Panc1 (cell line): ENCODE measurements at regions of chr19 and their contacts with region 1.

Region 1: DNA sequence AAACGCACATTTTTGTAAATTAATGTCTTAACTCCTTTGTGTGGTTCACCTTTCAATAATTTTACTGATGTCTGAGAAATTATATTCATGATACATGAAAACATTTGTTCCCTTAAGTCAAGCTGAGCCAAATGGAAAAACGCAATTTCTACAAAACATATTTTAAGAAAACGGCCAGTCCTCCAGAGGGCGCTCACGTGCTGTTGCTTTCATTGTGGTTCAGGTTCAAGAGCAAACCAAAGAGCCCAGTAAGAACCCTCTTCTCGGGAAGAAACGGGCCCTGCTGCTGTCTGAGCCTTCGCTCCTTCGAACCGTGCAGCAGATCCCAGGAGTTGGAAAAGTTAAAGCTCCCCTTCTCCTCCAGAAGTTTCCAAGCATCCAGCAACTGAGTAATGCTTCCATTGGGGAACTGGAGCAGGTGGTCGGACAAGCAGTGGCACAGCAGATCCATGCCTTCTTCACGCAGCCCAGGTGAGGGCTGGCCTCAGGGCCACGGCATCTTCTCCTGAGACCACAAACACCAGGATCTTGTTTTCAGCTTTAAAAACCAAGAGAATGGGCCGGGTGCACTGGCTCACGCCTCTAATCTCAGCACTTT is 4.3 kb downstream of the FAAP24 start:
- DNase-seq: peak; percentile 48
- ATAC-seq: no peak
- H3K4me3 ChIP-seq: no peak overlapping the region
- H3K27ac ChIP-seq: no peak overlapping the region
- H3K4me1 ChIP-seq: 0 out of 2 replicates have a peak, but pooled peaks cover 6% of the 10 kb centered on the region
- H3K27me3 ChIP-seq: no peaks in the 10 kb centered on the region
- CTCF ChIP-seq: peak; percentile 95

Region 2: GRCh38 chr19:32988724-32989123 is 12.4 kb after region 1 on chr19:
- CTCF ChIA-PET with region 1: no interaction called
- POLR2A ChIA-PET with region 1: no interaction called
- in situ Hi-C with region 1: no loop called
- intact Hi-C with region 1: no loop called
- DNase-seq: no peak
- ATAC-seq: no peak
- H3K4me3 ChIP-seq: no peak overlapping the region
- H3K27ac ChIP-seq: no peak overlapping the region
- H3K4me1 ChIP-seq: no peaks in the 10 kb centered on the region
- H3K27me3 ChIP-seq: no peaks in the 10 kb centered on the region
- CTCF ChIP-seq: no peak

Region 3: DNA sequence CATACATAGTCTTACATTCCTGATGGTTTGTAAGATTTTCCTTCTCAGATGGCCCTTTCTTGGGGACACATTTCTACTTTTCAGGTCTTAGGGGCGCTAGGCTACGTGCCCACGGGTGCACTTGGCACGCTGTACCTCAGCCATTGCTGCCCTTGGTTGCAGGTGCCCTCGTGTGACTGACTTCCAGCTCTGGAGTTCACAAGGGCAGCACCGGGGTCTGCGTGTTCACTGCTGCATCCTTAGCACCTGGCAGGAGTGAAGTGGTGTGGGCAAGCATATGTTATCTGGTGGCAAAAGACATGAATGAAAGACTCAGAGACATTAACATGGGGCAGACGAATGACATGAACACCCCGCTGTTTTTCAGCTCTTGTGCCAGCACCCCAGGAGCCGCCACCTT is 142.3 kb after region 1 on chr19:
- CTCF ChIA-PET with region 1: no interaction called
- POLR2A ChIA-PET with region 1: interaction called, 3 read pairs
- in situ Hi-C with region 1: no loop called
- intact Hi-C with region 1: loop called (anchors 5 kb)
- DNase-seq: no peak
- ATAC-seq: peak; percentile 50
- H3K4me3 ChIP-seq: no peak overlapping the region
- H3K27ac ChIP-seq: peak overlapping the region; percentile 48
- H3K4me1 ChIP-seq: peaks cover 3% of the 10 kb centered on the region; the same call in 1 of the 2 replicates
- H3K27me3 ChIP-seq: no peaks in the 10 kb centered on the region
- CTCF ChIP-seq: no peak